Activated CD8-positive, alpha-beta T cell treated with anti-CD3 and anti-CD28 coated beads, Interleukin-2, amount 10 ng/mL, durations not matched to agents 7 days and 5 days (primary cell): ENCODE measurements at regions of chr16 and their contacts with region 1.

Region 1: DNA sequence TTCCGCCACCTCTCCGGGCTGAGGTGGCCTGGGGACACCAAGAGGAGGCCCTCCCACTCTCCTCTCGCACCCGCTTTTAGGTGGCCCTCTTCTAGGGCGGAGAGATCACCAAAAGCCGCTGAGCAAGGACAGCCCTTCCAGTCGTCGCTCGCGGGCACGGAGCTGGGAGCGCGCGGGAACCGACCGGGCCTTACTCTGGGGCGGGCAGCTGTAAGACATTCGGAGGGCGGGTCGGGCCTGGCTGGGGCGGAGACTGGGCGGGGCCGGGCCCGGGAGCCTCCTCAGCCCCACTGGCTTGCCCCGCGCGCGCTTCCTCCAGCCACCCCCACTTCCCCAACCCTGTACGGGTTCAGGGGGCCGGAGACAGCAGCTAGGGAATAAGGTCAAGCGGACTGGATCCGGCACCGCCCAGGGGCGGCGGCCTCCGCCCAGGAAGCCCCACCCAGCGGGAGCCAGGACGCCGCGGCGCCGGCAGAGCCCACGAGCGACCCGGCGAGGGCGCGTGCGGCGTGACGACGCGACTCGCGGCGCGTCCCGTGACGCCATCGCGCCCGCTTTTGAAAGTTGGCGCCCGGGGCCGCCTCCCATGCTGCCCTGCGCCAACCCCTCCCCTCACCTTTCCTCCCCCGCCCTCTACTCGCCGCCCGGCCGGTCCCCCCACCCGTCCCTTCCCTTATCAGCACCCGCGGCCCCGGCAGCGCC is 351 bp upstream of the CTCF start:
- DNase-seq: peak; percentile 99
- ATAC-seq: peak; percentile 92
- H3K4me3 Mint-ChIP-seq: peak overlapping the region; percentile 88
- H3K27ac Mint-ChIP-seq: peak overlapping the region; percentile 95
- H3K4me1 Mint-ChIP-seq: peaks cover 43% of the 10 kb centered on the region
- H3K27me3 Mint-ChIP-seq: no peaks in the 10 kb centered on the region

Region 2: DNA sequence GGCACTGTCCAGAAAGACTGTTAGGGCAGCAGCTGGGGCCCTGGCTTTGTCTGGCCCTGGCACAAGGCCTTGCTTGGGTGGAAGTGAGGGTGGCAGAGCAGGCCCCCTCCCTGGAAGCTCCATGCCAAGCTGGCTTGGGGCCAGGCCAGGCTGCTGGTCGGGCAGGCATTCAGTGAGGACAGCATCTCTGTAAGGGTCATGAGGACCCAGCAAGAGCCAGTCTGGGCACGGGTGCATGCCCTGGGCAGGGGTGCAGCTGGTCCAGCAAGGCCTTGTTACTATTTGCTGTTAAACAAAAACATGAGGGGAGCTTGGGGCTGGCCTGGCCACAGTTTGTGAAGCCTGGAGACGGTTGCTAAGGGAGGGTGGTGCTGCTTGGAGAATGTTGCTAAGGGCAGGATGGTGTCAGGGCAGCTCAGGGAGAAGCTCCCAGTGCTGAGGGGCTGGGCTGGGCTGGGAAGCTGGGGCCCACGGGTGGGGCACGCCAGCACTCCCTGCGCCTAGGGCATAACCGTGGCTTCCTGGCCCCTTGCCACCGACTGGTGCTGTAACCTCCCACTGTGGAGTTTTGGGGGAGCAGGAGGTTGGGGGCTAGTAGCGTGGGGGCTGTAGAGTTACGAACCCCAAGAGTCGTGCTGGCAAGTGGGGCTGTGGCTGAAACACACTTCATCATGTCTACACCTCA is 170.4 kb before region 1 on chr16:
- CTCF ChIA-PET with region 1: no interaction called
- POLR2A ChIA-PET with region 1: no interaction called
- DNase-seq: no peak
- ATAC-seq: peak; percentile 48
- H3K4me3 Mint-ChIP-seq: no peak overlapping the region
- H3K27ac Mint-ChIP-seq: no peak overlapping the region
- H3K4me1 Mint-ChIP-seq: peaks cover 9% of the 10 kb centered on the region
- H3K27me3 Mint-ChIP-seq: peaks cover 35% of the 10 kb centered on the region

Region 3: DNA sequence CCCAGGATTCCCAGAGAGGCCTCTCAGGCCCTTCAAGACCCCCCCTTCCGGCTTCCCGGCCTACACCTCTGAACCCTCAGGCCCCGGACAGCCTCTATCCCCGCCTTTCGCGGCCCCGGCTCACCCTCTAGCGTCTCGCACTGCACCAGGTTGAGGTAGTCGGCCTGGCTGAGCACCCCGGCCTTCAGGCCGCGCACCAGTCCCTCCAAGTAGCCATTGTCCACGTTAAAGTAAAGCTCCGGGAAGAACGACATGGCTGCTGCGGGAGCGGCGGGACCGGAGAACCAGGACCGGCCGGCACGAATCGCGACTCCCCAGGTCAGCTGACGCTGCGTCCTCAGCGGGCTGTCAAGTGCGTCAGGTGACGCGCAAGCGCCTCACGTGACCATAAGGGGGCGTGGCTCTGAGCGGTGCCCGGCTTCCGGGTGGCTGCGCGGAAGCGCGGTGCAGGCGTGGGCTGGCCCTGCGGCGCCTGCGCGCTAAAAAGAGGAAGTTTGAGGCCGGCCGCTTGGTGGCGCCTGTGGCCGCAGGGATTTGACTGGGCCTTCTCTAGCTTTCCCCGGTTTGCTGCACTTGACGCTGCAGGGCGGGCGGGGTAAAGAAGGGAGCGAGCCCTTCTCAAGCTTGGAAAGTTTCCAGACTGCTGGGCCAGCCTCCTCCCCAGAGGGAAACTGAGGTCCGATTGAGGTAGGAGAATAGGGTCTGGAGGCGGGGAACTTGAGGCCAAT is 81.0 kb before region 1 on chr16 and contains the start of gene ATP6V0D1:
- CTCF ChIA-PET with region 1: interaction called, 12 read pairs
- POLR2A ChIA-PET with region 1: interaction called, 14 read pairs
- DNase-seq: peak; percentile 99
- ATAC-seq: peak; percentile 89
- H3K4me3 Mint-ChIP-seq: peak within 1 kb of the TSS; percentile 98
- H3K27ac Mint-ChIP-seq: peak within 1 kb of the TSS; percentile 99
- H3K4me1 Mint-ChIP-seq: peaks cover 38% of the 10 kb centered on the region
- H3K27me3 Mint-ChIP-seq: no peaks in the 10 kb centered on the region
- total RNA-seq, gene ATP6V0D1: 52.7 to 58.1 TPM

Region 4: DNA sequence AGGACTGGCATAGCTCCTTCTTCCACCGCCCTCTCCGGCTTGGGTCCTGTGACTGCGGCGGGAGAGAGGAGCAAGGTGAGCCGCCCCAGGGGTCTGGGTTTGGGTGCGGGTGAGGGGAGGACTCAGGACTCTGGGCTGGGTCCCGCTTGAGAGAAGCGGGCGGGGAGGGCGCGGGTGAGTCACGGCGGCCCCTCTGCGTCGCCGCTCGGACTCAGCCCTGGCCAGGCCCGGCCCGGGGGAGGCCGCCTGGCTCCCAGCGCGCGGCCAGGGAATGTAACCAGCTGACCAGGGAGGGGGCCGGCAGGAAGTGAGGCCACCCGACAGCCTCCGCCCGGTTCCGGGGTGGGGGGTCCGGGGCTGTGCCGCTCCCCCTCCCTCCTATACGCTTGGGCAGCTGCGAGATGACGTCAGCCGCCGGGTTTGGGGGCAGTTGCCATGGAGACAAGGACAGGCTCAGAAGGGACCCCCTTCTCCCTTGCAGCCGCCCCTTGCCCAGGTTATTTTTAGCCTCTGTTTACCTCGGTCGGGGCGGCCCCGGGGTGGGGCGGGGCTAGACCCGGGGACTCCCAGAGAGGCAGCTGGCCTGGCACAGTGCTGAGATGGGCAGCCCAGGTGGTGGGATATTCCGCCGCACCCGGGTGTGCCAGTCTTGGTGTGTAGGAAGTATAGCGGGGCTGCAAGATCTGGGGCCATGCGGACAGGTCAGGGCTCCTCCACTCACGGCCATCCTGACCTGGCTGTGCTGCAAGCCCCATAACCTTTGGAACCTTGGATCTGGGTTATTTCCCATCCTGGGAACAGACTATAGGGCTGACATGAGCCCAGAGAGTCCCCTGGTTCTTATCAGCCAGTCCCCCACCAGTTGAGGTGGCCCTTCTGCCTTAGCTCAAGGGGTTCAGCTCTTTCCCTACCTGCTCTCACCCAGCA is 31.7 kb before region 1 on chr16:
- CTCF ChIA-PET with region 1: interaction called, 12 read pairs
- POLR2A ChIA-PET with region 1: interaction called, 9 read pairs
- DNase-seq: no peak
- ATAC-seq: peak; percentile 9
- H3K4me3 Mint-ChIP-seq: peak overlapping the region; percentile 44
- H3K27ac Mint-ChIP-seq: no peak overlapping the region
- H3K4me1 Mint-ChIP-seq: peaks cover 20% of the 10 kb centered on the region
- H3K27me3 Mint-ChIP-seq: peaks cover 50% of the 10 kb centered on the region

Region 5: GRCh38 chr16:67571981-67572431 is 10.0 kb after region 1 on chr16:
- CTCF ChIA-PET with region 1: interaction called, 12 read pairs
- POLR2A ChIA-PET with region 1: interaction called, 8 read pairs
- DNase-seq: no peak
- ATAC-seq: no peak
- H3K4me3 Mint-ChIP-seq: no peak overlapping the region
- H3K27ac Mint-ChIP-seq: peak overlapping the region; percentile 34
- H3K4me1 Mint-ChIP-seq: peaks cover 6% of the 10 kb centered on the region
- H3K27me3 Mint-ChIP-seq: no peaks in the 10 kb centered on the region

Region 6: GRCh38 chr16:67660564-67661028 is 98.6 kb after region 1 on chr16 and contains the start of gene PARD6A:
- CTCF ChIA-PET with region 1: interaction called, 19 read pairs
- POLR2A ChIA-PET with region 1: interaction called, 35 read pairs
- DNase-seq: peak; percentile 98
- ATAC-seq: peak; percentile 78
- H3K4me3 Mint-ChIP-seq: peak within 1 kb of the TSS; percentile 89
- H3K27ac Mint-ChIP-seq: peak within 1 kb of the TSS; percentile 96
- H3K4me1 Mint-ChIP-seq: peaks cover 31% of the 10 kb centered on the region
- H3K27me3 Mint-ChIP-seq: no peaks in the 10 kb centered on the region
- total RNA-seq, gene PARD6A: 13.2 to 14.7 TPM

Region 7: GRCh38 chr16:67667817-67668494 is 106.0 kb after region 1 on chr16:
- CTCF ChIA-PET with region 1: interaction called, 16 read pairs
- POLR2A ChIA-PET with region 1: interaction called, 7 read pairs
- DNase-seq: peak; percentile 90
- ATAC-seq: peak; percentile 85
- H3K4me3 Mint-ChIP-seq: peak overlapping the region; percentile 83
- H3K27ac Mint-ChIP-seq: peak overlapping the region; percentile 55
- H3K4me1 Mint-ChIP-seq: peaks cover 31% of the 10 kb centered on the region
- H3K27me3 Mint-ChIP-seq: no peaks in the 10 kb centered on the region